Panc1 (cell line): ENCODE measurements at regions of chr2 and their contacts with region 1.

Region 1: GRCh38 chr2:105335469-105335868 is 1.9 kb upstream of the C2orf49 start:
- DNase-seq: no peak
- ATAC-seq: no peak
- H3K4me3 ChIP-seq: no peak overlapping the region
- H3K27ac ChIP-seq: peak overlapping the region; percentile 31; the same call in 1 of the 2 replicates
- H3K4me1 ChIP-seq: peaks cover 18% of the 10 kb centered on the region
- H3K27me3 ChIP-seq: no peaks in the 10 kb centered on the region
- CTCF ChIP-seq: no peak

Region 2: GRCh38 chr2:105143467-105144151 is 191.9 kb before region 1 on chr2:
- CTCF ChIA-PET with region 1: no interaction called
- POLR2A ChIA-PET with region 1: no interaction called
- in situ Hi-C with region 1: no loop called
- intact Hi-C with region 1: no loop called
- DNase-seq: no peak
- ATAC-seq: peak; percentile 26; the same call in 1 of the 2 replicates
- H3K4me3 ChIP-seq: peak overlapping the region; percentile 27 to 33
- H3K27ac ChIP-seq: no peak overlapping the region
- H3K4me1 ChIP-seq: peaks cover 4% of the 10 kb centered on the region; the same call in 1 of the 2 replicates
- H3K27me3 ChIP-seq: peaks cover 29% of the 10 kb centered on the region
- CTCF ChIP-seq: no peak

Region 3: GRCh38 chr2:105299295-105299694 is 36.2 kb before region 1 on chr2:
- CTCF ChIA-PET with region 1: no interaction called
- POLR2A ChIA-PET with region 1: interaction called, 13 read pairs
- in situ Hi-C with region 1: no loop called
- intact Hi-C with region 1: no loop called
- DNase-seq: no peak
- ATAC-seq: peak; percentile 63
- H3K4me3 ChIP-seq: no peak overlapping the region
- H3K27ac ChIP-seq: no peak overlapping the region
- H3K4me1 ChIP-seq: no peaks in the 10 kb centered on the region
- H3K27me3 ChIP-seq: no peaks in the 10 kb centered on the region
- CTCF ChIP-seq: no peak